Right ventricle myocardium inferior (tissue), 1 donor: ENCODE measurements at regions of chr19 and their contacts with region 1.

Region 1: GRCh38 chr19:17766543-17767131 is 15.4 kb downstream of the FCHO1 start:
- DNase-seq: peak; percentile 88
- ATAC-seq: peak; percentile 68

Region 2: DNA sequence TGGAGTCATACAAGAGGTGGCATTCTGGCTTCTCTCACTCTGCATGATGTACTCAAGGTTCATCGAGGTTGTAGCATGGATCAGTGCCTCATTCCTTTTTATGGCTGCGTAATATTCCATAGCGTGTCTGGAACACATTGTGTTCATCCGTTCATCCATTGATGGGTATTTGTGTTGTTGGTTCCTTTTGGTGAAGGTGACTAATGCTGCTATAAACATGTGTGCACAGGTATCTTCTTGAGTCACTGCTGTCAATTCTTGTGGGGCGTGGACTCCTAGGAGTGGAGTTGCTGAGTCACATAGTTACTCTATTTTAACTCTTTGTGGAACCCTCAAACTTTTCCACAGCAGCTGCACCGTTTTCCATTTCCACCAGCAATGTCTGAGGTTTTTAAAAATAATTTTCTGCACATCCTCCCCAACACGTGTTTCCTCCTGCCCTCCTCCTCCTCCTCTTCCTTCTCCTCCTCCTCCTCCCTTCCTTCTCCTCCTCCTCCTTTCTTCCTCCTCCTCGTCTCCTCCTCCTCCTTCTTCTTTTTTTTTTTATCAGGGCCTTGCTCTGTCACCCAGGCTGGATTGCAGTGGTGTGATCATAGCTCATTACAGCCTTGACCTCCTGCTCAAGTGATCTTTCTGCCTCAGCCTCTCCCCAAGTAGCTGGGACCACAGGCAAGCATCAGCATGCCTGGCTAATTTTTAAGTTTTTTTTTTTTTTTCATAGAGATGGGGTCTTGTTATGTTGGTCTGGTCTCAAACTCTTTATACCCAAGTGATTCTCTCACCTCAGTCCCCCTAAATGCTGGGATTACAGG is 316.2 kb before region 1 on chr19:
- intact Hi-C with region 1: loop called (anchors 10 kb)
- DNase-seq: no peak
- ATAC-seq: no peak

Region 3: GRCh38 chr19:17703824-17704463 is 62.7 kb before region 1 on chr19:
- intact Hi-C with region 1: loop called (anchors 2 kb)
- DNase-seq: peak; percentile 79
- ATAC-seq: peak; percentile 73

Region 4: DNA sequence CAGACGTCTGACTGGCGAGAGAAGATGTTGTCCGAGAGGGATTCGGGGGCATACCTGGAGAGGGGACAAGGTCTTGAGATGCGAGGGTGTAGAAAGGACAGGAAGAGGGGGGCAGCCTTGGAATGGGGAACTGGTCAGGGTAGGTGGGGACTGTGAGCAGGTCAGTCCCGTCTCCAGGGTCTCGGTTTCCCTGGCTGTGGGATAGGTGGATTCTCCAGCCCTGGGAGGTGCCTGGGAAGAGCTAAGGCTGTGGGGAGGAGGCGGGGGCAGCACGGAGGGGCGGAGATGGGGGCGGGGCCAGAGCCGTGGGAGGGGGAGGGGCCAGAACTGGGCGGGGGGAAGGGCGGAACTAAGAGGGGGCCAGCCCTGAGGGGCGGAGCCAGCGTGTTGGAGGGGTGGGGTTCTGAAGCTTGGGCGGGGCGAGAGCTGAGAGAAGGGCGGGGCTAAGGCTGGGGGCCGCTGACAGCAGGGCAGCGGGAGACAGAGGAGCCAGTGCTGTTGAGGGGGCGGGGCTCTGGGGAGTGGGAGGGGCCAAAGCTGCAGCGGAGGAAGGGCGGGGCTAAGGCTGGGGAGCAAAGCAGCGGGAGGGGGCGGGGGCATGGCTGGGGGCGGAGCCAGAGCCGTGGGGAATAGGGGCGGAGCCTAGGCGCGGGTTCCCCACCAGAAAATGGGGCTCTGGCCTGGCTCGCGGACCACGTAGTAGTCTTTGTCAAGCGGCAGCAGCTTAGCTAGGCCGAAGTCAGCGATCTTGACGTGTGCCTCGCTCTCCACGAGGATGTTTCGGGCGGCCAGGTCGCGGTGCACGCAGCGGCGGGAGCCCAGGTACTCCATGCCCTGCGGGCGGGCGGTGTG is 64.2 kb after region 1 on chr19:
- intact Hi-C with region 1: no loop called
- DNase-seq: no peak
- ATAC-seq: peak; percentile 39